Left lung (tissue), 14 donors: ENCODE measurements at regions of chr1 and their contacts with region 1.

Region 1: GRCh38 chr1:153568367-153569099 is 2.9 kb upstream of the S100A2 start:
- DNase-seq: peak; percentile 76 to 96 (median 88)
- ATAC-seq: peak; percentile 45
- H3K4me3 ChIP-seq: peak overlapping the region in 1 of 2 donors; percentile 17
- H3K27ac ChIP-seq: peak overlapping the region; percentile 95 to 98
- H3K4me1 ChIP-seq: peaks cover 37 to 77% of the 10 kb centered on the region in 2 donors
- H3K27me3 ChIP-seq: no peaks in the 10 kb centered on the region
- CTCF ChIP-seq: peak; percentile 98

Region 2: DNA sequence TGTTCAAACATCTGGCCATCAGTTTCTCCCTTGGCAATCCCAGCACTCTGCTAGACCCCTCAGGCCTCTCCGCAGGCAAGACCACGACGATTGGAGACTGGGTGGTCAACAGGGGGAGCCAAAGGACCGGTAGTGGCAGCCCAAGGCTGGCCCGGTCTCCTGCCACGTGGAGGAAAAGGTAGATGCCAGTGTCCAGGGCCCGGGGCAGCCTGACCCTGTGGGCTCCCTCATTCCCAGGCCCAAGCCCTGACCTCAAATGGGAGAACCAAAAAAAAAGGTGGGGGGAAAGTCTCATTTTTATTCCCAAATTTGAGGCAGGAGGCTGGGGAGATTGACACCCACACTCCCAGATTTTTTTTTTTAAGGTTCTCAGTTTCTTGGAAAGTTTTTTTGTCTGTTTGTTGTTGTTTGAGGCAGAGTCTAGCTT is 57.5 kb before region 1 on chr1:
- intact Hi-C with region 1: loop called (anchors 5 to 10 kb)
- DNase-seq: peak; percentile 70 to 93 (median 85)
- ATAC-seq: peak; percentile 76
- H3K4me3 ChIP-seq: no peak overlapping the region
- H3K27ac ChIP-seq: no peak overlapping the region
- H3K4me1 ChIP-seq: peaks cover 8 to 28% of the 10 kb centered on the region in 2 donors
- H3K27me3 ChIP-seq: no peaks in the 10 kb centered on the region
- CTCF ChIP-seq: peak; percentile 80 to 87

Region 3: DNA sequence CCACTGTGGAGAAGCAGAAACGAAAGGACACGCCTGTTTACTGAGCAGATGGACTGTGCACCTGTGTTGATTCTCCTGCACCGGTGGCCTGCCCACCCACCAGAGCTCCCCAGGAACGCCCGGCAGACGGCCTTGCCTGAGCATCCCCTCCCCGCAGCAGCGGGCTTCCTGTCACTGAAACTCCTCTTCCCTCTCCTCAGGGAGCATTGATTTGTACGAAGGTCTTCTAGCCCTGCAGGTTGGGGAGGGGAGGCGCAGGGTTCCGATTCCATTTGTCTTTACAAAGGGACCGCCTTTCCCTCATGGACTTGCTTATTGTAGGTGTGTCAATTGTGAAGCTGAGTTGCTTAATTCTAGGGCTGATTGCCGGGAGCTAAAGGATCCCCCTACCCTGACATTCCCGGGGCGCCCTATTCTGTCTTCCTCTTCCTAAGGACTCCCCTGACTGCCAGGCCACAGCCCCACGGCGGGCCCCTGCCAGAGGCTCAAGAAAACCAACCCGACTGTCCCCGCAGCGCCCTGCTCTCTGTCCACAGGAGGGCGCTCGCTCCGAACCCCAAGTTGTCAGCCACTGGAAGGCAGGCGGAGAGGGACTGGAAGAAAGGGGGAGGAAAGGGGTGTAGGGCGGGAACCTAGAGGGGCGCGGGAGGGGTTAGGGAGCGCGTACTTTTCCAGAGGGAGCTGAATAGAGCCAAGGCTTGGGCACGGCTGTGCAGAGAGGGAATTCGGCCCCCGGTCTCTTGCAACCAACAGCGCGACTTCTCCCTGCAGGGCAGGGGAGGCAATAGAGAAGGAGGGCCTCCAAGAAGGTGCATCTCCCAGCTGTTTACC is 35.5 kb before region 1 on chr1:
- intact Hi-C with region 1: loop called in 1 of 2 experiments (anchors 5 kb)
- DNase-seq: peak; percentile 65 to 96 (median 89)
- ATAC-seq: peak; percentile 73
- H3K4me3 ChIP-seq: peak overlapping the region; percentile 84 to 92
- H3K27ac ChIP-seq: peak overlapping the region; percentile 98 to 99
- H3K4me1 ChIP-seq: peaks cover 13 to 55% of the 10 kb centered on the region in 2 donors
- H3K27me3 ChIP-seq: no peaks in the 10 kb centered on the region
- CTCF ChIP-seq: peak; percentile 72 to 87

Region 4: GRCh38 chr1:153903841-153904455 is 335.4 kb after region 1 on chr1:
- intact Hi-C with region 1: no loop called
- DNase-seq: no peak
- ATAC-seq: no peak
- H3K4me3 ChIP-seq: no peak overlapping the region
- H3K27ac ChIP-seq: no peak overlapping the region
- H3K4me1 ChIP-seq: peaks cover 0 to 24% of the 10 kb centered on the region in 2 donors
- H3K27me3 ChIP-seq: no peaks in the 10 kb centered on the region
- CTCF ChIP-seq: no peak